ENCODE measurements at regions of chr1 and their contacts with region 1.

Region 1: DNA sequence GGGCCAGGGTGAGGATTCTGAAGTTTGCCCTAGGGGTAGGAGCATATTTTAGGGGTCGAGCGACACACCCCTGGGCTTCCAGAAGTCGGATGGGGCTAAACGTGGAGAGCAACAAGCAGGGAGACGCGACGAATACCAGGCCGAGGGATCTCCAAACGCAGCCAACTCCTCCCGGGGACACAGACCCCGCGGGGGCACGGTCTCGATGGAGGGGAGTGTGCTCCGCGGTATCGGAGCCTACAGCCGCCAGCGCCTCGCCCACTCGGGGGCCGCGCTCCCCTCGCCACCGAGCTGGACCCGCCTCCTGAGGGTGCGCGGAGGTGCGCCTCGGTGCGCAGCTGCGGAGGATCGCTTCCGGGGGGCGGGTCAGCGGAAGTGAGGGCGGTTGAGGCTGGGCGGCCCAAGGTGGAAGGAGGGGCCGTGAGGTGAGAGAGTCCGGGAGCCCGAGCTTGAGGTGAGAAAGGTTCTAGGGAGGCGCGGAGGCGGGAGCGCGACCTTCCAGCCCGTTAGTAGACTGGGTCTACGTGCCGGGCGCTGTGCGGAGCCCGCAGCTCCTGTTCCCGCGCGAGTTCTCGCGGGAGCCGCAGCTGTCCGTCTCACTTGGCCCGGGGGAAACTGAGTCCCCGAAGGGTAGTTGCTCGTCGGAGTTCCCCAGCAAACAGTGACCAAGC is at the start of gene MTFR1L:
- DNase-seq: peak; percentile 92 to 95 (median 93)
- H3K4me3 ChIP-seq: peak within 1 kb of the TSS; percentile 73 to 94
- H3K4me3 Mint-ChIP-seq: peak within 1 kb of the TSS; percentile 93 to 99 (median 96)
- H3K27ac ChIP-seq: peak within 1 kb of the TSS; percentile 88
- H3K27ac Mint-ChIP-seq: peak within 1 kb of the TSS; percentile 91 to 99 (median 98)
- H3K4me1 ChIP-seq: peaks cover 31% of the 10 kb centered on the region
- H3K4me1 Mint-ChIP-seq: peaks cover 28 to 41% (median 35%) of the 10 kb centered on the region in 4 donors
- H3K27me3 ChIP-seq: no peaks in the 10 kb centered on the region
- H3K27me3 Mint-ChIP-seq: no peaks in the 10 kb centered on the region
- total RNA-seq, gene MTFR1L: 53.3 to 57.2 TPM

Region 2: DNA sequence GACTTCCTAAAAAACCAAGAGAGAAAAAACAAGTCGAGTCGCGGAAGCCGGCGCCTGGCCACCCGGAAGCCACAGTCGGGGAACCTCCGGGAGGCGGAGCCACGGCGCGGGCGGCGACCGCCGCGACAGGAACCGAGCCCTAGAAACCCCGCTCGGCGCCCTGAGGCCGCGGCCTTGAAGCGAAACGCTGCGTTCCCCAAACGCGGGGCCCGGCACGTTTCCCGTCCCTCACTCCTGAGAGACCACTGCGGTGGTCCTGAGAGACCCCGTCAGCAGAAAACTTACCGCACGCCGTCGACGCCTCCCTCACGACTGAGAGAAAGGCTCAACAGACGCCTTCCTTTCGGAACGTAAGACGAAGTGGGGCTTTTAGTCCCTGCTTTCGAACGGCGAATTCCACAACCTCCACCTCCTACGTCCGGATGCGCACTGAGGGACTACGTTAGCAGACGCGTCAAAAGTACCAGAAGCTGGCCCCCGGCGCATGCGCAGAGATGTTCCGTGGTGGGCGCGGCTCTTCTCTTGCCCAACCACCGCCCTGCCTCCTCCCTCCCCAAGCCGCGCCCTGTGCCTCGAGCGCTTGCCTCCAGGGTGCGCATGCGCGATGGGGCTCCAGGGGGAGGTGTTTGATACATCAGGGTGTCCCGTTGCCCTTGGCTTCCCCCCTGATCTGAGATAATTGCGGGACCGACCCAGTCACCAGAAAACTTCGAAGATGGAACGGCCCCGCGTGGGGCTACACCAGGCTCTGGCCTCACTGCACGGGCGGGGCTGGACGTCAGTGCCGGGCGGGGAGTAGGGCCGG is 572.5 kb before region 1 on chr1 and contains the start of gene RSRP1:
- CTCF ChIA-PET with region 1: no interaction called
- POLR2A ChIA-PET with region 1: interaction called, 12 read pairs
- intact Hi-C with region 1: no loop called
- DNase-seq: peak; percentile 99 to 100 (median 99)
- H3K4me3 ChIP-seq: peak within 1 kb of the TSS; percentile 89 to 98
- H3K4me3 Mint-ChIP-seq: peak within 1 kb of the TSS; percentile 96 to 100 (median 98)
- H3K27ac ChIP-seq: peak within 1 kb of the TSS; percentile 97
- H3K27ac Mint-ChIP-seq: peak within 1 kb of the TSS; percentile 99 to 100 (median 100)
- H3K4me1 ChIP-seq: peaks cover 45% of the 10 kb centered on the region
- H3K4me1 Mint-ChIP-seq: peaks cover 25 to 66% (median 39%) of the 10 kb centered on the region in 4 donors
- H3K27me3 ChIP-seq: no peaks in the 10 kb centered on the region
- H3K27me3 Mint-ChIP-seq: peaks cover 0 to 2% of the 10 kb centered on the region in 2 donors
- total RNA-seq, gene RSRP1: 470 to 494 TPM

Region 3: GRCh38 chr1:25566730-25567341 is 252.9 kb before region 1 on chr1:
- CTCF ChIA-PET with region 1: no interaction called
- POLR2A ChIA-PET with region 1: interaction called, 8 read pairs
- intact Hi-C with region 1: loop called (anchors 5 kb)
- DNase-seq: peak in 1 of 5 donors; percentile 46
- H3K4me3 ChIP-seq: no peak overlapping the region
- H3K4me3 Mint-ChIP-seq: peak overlapping the region in 5 of 8 donors; percentile 13 to 88 (median 68)
- H3K27ac ChIP-seq: no peak overlapping the region
- H3K27ac Mint-ChIP-seq: peak overlapping the region in 6 of 7 donors; percentile 32 to 95 (median 73)
- H3K4me1 ChIP-seq: peaks cover 76% of the 10 kb centered on the region
- H3K4me1 Mint-ChIP-seq: peaks cover 35 to 93% (median 60%) of the 10 kb centered on the region in 4 donors
- H3K27me3 ChIP-seq: no peaks in the 10 kb centered on the region
- H3K27me3 Mint-ChIP-seq: no peaks in the 10 kb centered on the region

Region 4: DNA sequence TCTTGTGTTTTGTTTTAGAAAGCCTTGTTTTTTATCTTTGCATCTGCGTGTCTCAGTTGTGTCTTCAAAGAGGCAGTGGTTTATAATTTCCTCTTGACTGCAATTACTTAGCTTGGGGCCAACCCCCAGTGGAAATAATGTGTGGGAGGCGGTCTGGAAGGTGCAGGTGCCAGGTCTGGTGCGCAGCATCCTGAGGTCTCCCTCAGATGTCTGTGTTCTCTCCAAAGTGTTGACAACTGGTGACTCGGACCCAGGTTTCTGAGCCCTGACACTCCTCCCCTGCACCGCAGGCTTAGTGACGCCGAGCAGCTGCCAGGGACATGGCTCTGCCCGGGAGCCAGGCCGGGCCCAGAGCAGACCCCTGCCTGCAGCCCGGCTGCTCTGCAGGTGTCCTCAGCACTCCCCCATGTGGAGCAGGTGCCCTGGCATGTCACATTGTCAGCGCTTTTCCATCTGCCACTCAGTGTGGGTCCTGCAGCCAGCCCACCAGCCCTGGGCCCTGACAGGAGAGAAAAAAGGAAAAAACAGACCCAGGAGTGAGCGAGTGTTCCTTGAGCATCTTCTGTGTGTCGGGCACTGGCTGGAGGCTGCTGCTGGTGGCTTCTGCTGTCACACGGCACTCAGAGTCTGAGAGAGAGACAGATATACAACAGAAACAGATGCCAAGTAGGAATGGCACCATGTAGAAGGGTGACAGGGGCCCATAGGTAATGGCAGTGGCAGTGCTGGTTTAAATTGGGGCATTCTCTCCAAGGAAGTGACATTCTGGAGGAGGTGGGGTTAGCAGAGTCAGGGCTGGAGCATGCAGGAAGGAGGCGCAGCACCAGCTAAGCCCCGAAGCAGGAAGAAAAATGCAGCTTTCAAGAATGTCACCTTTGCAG is 44.5 kb before region 1 on chr1:
- CTCF ChIA-PET with region 1: interaction called, 3 read pairs
- POLR2A ChIA-PET with region 1: interaction called, 20 read pairs
- intact Hi-C with region 1: no loop called
- DNase-seq: peak; percentile 89 to 97 (median 91)
- H3K4me3 ChIP-seq: peak overlapping the region; percentile 8 to 47
- H3K4me3 Mint-ChIP-seq: peak overlapping the region; percentile 66 to 90 (median 82)
- H3K27ac ChIP-seq: peak overlapping the region; percentile 45
- H3K27ac Mint-ChIP-seq: peak overlapping the region; percentile 90 to 99 (median 93)
- H3K4me1 ChIP-seq: peaks cover 64% of the 10 kb centered on the region
- H3K4me1 Mint-ChIP-seq: peaks cover 48 to 73% (median 51%) of the 10 kb centered on the region in 4 donors
- H3K27me3 ChIP-seq: no peaks in the 10 kb centered on the region
- H3K27me3 Mint-ChIP-seq: no peaks in the 10 kb centered on the region

Region 5: DNA sequence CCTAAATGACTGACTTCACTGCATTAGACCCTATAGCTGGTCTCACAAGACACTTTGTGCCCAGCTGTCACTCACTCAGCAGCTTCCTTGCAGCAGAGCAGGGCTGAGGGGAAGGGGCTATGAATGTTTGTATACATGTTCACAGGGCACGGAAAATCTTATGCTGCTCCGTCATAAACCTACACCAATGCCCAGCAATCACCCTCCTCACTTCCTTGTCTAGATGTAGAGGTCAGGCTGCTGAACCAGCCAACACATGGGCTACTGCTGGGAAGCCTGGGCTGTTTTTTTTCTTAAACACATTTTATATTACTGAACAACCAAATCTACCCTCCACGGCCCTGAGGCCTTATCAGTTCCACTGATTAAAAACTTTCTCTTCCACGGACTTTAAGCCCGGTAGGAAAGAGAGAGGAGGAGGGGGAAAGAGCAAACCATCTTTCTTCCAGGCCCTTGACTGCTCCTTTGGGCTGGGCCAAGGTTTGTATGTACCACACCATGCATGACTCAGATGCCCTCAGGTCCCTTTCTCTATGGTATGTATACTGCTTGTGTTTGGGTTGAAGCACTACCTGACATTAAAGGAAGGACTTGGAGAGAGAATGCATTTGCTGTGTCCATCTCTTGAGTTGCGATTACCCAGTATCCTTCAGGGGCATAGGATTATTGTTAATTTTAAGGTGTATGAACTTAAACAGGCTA is 12.8 kb after region 1 on chr1:
- CTCF ChIA-PET with region 1: interaction called, 5 read pairs
- POLR2A ChIA-PET with region 1: interaction called, 15 read pairs
- intact Hi-C with region 1: no loop called
- DNase-seq: no peak
- H3K4me3 ChIP-seq: no peak overlapping the region
- H3K4me3 Mint-ChIP-seq: no peak overlapping the region
- H3K27ac ChIP-seq: no peak overlapping the region
- H3K27ac Mint-ChIP-seq: peak overlapping the region in 1 of 7 donors; percentile 60
- H3K4me1 ChIP-seq: peaks cover 10% of the 10 kb centered on the region
- H3K4me1 Mint-ChIP-seq: peaks cover 0 to 11% (median 2%) of the 10 kb centered on the region in 4 donors
- H3K27me3 ChIP-seq: no peaks in the 10 kb centered on the region
- H3K27me3 Mint-ChIP-seq: no peaks in the 10 kb centered on the region

Region 6: DNA sequence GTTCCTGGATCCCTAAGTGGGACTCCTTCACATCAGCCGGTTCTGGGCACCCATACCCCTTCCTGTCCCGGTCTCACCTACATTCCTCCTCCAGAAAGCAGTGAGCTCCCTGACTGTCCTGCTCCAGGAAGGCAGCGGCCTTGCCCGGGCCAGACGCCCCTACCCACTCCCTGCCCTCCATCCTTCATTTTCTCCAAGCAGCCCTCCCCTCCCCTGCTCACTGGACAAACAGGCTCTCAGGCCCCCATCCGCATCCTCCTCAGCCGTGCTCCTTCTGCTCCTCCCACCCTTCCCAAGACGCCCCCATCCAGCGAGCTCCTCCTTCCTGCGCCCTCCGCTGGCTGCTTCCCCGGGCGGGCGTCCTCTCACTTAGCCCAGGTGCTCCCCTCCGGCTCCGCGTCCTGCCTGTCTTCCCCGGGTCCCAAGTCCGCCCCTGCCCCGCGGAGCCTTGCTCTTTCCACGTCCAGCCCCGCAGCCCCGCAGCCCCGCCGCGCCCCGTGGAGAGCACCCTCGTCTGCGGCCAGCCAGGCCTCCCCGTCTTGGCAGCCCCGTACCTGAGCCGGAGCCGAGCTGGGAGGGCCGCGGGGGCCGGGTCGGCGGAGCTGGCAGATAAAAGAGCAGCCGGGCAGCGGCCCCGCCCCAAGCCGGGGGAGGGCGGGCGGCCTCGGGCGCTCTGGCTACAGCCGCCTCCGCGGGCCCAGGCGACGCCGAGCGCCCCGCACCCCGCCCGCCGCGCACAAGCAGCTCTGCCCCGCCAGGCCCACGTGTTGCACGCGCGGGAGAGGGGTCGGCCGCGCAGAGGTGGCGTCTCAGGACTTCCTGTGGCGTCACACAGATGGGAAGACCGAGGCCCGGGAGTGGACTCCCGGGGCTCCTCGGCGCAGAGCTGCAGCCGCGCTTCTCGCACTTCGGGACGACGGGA is 55.5 kb after region 1 on chr1 and contains the start of gene PAQR7:
- CTCF ChIA-PET with region 1: interaction called, 3 read pairs
- POLR2A ChIA-PET with region 1: interaction called, 36 read pairs
- intact Hi-C with region 1: loop called (anchors 1 kb)
- DNase-seq: peak; percentile 55 to 65 (median 59)
- H3K4me3 ChIP-seq: peak within 1 kb of the TSS in 1 of 2 donors; percentile 51
- H3K4me3 Mint-ChIP-seq: peak within 1 kb of the TSS; percentile 80 to 88 (median 84)
- H3K27ac ChIP-seq: peak within 1 kb of the TSS; percentile 17
- H3K27ac Mint-ChIP-seq: peak within 1 kb of the TSS; percentile 13 to 89 (median 73)
- H3K4me1 ChIP-seq: peaks cover 10% of the 10 kb centered on the region
- H3K4me1 Mint-ChIP-seq: peaks cover 4 to 13% (median 6%) of the 10 kb centered on the region in 4 donors
- H3K27me3 ChIP-seq: no peaks in the 10 kb centered on the region
- H3K27me3 Mint-ChIP-seq: no peaks in the 10 kb centered on the region
- total RNA-seq, gene PAQR7: 2.1 to 2.6 TPM

Region 7: DNA sequence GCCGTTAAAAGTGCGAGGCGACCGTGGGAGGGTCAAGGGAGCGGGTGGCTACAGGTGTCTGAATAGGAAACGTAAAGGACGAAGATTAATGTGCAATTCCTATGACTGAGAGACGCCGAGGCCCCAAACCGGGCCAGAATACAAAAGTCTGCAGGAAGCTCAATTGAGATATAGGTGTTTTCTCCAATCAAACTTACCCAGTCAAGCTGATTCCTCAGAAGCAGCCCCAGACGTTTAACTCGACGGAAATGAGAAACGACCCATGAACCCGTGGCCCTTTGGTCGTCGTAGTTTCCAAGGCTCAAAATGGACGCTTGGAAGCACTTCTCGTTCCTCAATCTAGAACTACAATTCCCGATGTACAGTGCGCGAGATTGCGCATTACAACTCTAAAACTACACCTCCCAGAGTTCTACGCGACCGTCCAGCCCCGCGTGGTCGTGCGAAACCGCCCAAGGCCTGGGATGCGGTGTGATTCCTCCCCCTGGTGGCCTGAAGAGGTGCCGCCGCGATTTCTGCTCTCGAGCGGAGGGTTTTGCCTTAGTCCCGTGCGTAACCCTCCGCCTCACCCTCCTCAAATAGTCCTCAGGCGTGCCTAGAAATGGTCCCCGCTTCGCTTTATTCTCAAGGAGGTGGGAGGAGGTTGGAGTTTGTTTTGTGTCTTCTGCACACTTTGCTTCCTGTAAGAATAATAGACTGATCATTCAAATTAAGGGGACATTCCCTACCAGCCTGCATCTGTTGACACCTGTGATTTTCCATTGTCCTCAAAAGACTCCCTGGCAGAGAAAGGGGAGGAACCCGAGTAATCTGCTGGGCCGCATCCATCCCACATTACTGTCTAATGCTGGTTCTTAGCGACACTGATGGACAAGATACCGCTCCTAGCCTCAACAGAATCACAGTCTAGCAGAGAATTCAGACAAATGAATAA is 178.4 kb after region 1 on chr1 and contains the start of gene PAFAH2:
- CTCF ChIA-PET with region 1: no interaction called
- POLR2A ChIA-PET with region 1: interaction called, 15 read pairs
- intact Hi-C with region 1: loop called (anchors 1 kb)
- DNase-seq: peak; percentile 95 to 99 (median 98)
- H3K4me3 ChIP-seq: peak within 1 kb of the TSS; percentile 67 to 86
- H3K4me3 Mint-ChIP-seq: peak within 1 kb of the TSS; percentile 92 to 96 (median 94)
- H3K27ac ChIP-seq: peak within 1 kb of the TSS; percentile 84
- H3K27ac Mint-ChIP-seq: peak within 1 kb of the TSS; percentile 97 to 99 (median 98)
- H3K4me1 ChIP-seq: peaks cover 29% of the 10 kb centered on the region
- H3K4me1 Mint-ChIP-seq: peaks cover 21 to 31% (median 28%) of the 10 kb centered on the region in 4 donors
- H3K27me3 ChIP-seq: no peaks in the 10 kb centered on the region
- H3K27me3 Mint-ChIP-seq: no peaks in the 10 kb centered on the region
- total RNA-seq, gene PAFAH2: 18.3 to 20.0 TPM

Measured in CD4-positive, alpha-beta memory T cell (primary cell).